ENCODE measurements at regions of chr2 and their contacts with region 1.

Region 1: GRCh38 chr2:234533626-234534025 is 36.7 kb upstream of the ARL4C start:
- DNase-seq: no peak
- H3K4me3 ChIP-seq: no peak overlapping the region
- H3K4me3 Mint-ChIP-seq: no peak overlapping the region
- H3K27ac ChIP-seq: no peak overlapping the region
- H3K27ac Mint-ChIP-seq: no peak overlapping the region
- H3K4me1 ChIP-seq: no peaks in the 10 kb centered on the region
- H3K4me1 Mint-ChIP-seq: no peaks in the 10 kb centered on the region
- H3K27me3 ChIP-seq: no peaks in the 10 kb centered on the region
- H3K27me3 Mint-ChIP-seq: peaks cover 9 to 28% of the 10 kb centered on the region in 2 donors

Region 2: DNA sequence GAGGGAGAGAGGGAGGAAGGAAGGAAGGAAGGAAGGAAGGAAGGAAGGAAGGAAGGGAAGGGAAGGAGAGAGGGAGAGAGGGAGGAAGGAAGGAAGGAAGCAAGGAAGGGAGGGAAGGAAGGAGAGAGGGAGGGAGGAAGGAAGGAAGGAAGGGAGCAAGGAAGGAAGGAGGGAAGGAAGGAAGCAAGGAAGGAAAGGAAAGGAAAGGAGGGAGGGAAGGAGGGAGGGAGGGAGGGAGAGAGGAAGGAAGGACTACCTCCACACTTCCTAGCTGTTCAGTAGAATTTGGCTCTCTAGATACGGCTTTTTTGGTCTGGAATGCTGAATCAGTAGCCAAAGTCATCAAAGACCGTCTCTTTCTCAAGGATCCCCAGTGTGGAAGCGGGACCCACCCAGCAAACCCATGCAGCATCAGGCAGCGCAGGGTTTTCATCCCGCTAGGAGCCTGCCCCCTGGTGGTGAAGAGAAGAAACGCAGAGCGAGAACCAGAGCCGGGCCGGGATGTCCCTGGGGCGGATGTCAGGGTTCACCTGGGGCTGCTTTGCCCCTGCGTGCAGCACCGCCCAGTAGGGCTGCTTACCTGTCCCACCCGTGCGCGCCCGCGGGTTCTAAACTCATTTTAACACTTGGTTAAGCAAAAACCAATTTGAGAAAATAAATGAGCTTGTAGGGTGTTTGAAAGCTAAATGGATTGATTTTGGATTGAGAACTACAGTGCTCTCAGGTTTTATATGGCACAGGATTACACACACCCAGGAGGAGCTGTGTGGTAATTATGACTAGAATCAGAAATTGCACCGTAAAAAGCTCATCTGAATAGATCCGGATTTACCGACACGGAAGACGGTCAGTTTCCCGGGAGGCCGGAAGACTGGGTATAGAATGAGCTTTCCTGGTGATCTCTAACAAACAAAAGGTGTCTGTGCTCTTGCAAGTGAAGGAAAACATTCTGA is 11.3 kb after region 1 on chr2:
- CTCF ChIA-PET with region 1: interaction called, 16 read pairs
- POLR2A ChIA-PET with region 1: no interaction called
- DNase-seq: peak; percentile 62 to 82 (median 67)
- H3K4me3 ChIP-seq: no peak overlapping the region
- H3K4me3 Mint-ChIP-seq: no peak overlapping the region
- H3K27ac ChIP-seq: no peak overlapping the region
- H3K27ac Mint-ChIP-seq: peak overlapping the region in 1 of 8 donors; percentile 43
- H3K4me1 ChIP-seq: no peaks in the 10 kb centered on the region
- H3K4me1 Mint-ChIP-seq: peaks cover 4 to 11% (median 7%) of the 10 kb centered on the region in 3 donors
- H3K27me3 ChIP-seq: no peaks in the 10 kb centered on the region
- H3K27me3 Mint-ChIP-seq: peaks cover 9 to 37% of the 10 kb centered on the region in 2 donors